ENCODE measurements at regions of chr19 and their contacts with region 1.

Region 1: GRCh38 chr19:32691291-32691951 is at the start of gene NUDT19:
- H3K4me3 ChIP-seq: peak within 1 kb of the TSS; percentile 52
- H3K27ac ChIP-seq: peak within 1 kb of the TSS; percentile 96
- H3K4me1 ChIP-seq: peaks cover 23% of the 10 kb centered on the region
- CTCF ChIP-seq: peak; percentile 56; the same call in 1 of the 2 replicates

Region 2: DNA sequence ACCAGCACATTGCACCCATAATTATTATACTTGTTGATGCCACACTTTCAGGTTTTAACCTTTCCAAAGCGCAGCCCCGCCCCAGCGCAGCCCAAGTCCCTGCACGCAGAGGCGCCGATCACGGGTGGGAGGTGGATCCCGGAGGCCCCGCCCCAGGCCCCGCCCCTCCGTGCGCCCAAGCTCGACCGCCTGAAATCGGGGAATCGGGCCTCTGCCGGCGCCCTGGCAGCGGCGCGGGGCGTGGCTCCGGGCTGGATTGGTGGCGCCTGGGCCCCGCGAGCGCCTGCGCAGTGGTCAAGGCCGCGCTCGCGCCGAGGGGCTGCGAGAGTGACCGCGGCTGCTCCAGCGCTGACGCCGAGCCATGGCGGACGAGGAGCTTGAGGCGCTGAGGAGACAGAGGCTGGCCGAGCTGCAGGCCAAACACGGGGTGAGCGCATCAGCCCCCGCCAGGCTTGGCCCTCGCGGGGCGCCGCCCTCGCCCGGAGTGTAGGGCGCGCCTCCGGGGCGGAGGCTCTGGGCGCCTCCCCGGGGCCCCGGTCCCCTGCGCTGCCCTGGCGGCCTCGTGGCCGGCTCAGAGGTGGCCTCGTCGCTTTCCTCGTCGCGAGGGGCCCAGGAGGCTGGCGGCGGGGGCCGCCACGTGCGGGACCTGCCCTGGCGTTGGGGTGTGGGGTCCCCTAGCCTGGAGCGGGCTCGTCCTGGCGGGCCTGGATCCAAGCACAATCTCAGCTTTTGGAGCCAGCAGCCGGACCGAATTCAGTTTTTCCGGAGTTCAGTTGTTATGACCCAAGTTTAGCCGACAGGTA is 110.3 kb before region 1 on chr19 and contains the start of gene PDCD5:
- CTCF ChIA-PET with region 1: interaction called, 3 read pairs
- POLR2A ChIA-PET with region 1: interaction called, 13 read pairs
- H3K4me3 ChIP-seq: peak within 1 kb of the TSS; percentile 76
- H3K27ac ChIP-seq: peak within 1 kb of the TSS; percentile 98
- H3K4me1 ChIP-seq: peaks cover 21% of the 10 kb centered on the region
- CTCF ChIP-seq: no peak

Region 3: DNA sequence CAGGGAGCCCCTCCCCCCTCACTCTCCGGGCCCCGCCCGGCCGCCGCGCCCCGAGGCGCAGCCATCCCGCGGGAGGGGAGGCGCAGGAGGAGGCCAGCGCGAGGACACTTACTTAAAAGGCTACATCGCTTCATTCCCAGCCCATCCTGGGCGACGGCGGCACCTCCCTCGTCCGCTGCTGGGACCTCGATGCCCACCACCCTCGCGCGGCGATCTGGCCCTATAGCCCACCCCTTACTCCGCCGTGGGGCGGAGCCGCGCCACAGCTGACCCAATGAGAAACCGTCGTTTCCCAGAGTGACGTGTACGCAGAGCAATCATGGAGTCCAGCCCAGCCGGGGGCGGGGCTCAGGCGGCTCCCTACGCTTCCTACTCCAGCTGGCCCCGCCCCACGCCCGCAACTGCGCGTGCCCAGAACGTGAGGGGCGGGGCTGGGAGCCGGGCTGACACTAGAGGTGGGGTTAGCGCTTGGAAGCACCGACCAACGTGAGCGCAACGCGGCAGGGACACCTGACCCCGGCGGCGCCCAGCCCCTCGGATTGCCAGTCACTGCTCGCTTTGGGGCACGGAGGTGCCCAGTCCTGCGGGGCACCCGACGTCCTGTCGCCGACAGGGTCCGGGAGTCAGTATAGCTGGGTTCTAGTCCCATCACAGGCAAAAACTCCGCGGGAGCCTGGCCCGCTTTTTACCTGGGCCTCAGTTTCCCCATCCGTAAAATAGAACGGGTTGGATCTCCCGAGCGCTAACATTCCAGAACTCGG is 16.3 kb before region 1 on chr19 and contains the start of gene ANKRD27:
- CTCF ChIA-PET with region 1: interaction called, 16 read pairs
- POLR2A ChIA-PET with region 1: interaction called, 44 read pairs
- H3K4me3 ChIP-seq: peak within 1 kb of the TSS; percentile 75
- H3K27ac ChIP-seq: peak within 1 kb of the TSS; percentile 82
- H3K4me1 ChIP-seq: peaks cover 26% of the 10 kb centered on the region
- CTCF ChIP-seq: no peak

Region 4: DNA sequence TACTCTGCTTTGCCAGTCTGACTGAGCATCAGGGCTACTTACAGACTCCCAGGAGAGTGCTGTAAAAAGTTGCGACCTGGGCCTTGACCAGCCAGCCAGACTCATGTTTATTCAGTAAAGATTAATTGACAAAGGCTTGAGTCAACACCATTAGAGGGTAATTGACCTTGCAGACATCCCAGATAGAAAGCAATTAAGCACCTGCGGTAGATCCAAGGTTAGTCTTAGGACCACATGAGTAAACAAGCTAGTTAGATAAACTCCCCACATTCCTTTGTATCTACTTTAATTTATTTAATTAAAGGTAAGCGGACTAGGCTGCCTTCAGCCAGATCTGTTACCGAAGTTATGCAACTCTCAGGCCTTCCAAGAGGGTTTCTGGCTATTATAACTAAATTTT is 10.7 kb after region 1 on chr19:
- CTCF ChIA-PET with region 1: interaction called, 4 read pairs
- POLR2A ChIA-PET with region 1: interaction called, 13 read pairs
- H3K4me3 ChIP-seq: no peak overlapping the region
- H3K27ac ChIP-seq: peak overlapping the region; percentile 54
- H3K4me1 ChIP-seq: peaks cover 19% of the 10 kb centered on the region
- CTCF ChIP-seq: no peak

Measured in HEK293 (cell line).